Activated CD4-positive, alpha-beta memory T cell treated with anti-CD3 and anti-CD28 coated beads for 36 hours (primary cell): ENCODE measurements at regions of chr1 and their contacts with region 1.

Region 1: DNA sequence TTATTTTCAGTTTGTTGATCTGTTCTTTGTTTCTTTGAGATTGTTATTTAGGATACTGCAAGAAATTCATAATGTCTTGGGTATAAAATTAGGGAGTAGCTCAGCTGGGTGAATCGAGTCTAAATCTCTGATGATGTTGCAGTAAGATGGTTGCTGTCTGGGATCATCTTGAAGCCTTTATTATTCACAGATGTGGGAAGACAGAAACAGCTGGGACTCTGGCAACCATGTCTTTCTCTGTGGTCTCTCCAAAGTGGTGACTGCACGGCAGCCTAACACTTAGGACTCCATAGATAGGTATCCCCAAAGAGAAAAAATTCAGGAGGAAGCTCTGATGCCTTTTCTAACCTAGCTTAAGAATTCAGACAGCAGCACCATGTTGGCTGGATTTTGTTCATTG is 52.7 kb downstream of the RAP1A start:
- DNase-seq: no peak
- H3K4me3 Mint-ChIP-seq: no peak overlapping the region
- H3K27ac Mint-ChIP-seq: peak overlapping the region; percentile 10
- H3K4me1 Mint-ChIP-seq: peaks cover 72% of the 10 kb centered on the region
- H3K27me3 Mint-ChIP-seq: no peaks in the 10 kb centered on the region

Region 2: GRCh38 chr1:111704776-111705175 is 32.4 kb after region 1 on chr1:
- CTCF ChIA-PET with region 1: interaction called, 4 read pairs
- POLR2A ChIA-PET with region 1: no interaction called
- intact Hi-C with region 1: loop called (anchors 5 kb)
- DNase-seq: no peak
- H3K4me3 Mint-ChIP-seq: no peak overlapping the region
- H3K27ac Mint-ChIP-seq: no peak overlapping the region
- H3K4me1 Mint-ChIP-seq: peaks cover 66% of the 10 kb centered on the region
- H3K27me3 Mint-ChIP-seq: no peaks in the 10 kb centered on the region